Adrenal gland (tissue), 19 donors: ENCODE measurements at regions of chr12 and their contacts with region 1.

Region 1: DNA sequence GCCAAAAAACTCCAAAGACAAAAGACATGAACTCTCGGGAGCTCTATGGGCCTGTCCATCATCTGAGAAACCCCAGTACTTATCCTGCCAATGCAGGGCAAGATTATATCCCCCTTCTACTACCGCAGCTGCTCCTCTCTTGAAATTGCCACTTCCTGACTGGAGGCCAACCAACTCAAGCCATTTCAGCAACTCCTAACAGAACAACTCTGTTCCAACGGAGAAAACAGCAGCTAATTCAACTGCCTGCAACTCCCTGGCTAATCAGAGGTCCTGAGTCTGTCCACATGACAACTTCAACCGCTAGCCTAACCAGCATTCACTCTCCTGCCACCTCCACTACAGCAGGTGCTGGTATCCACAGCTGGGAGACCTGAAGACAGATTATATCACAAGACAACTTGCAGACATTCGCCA is 24.1 kb downstream of the CEP83 start:
- DNase-seq: no peak
- H3K4me3 ChIP-seq: no peak overlapping the region
- H3K27ac ChIP-seq: no peak overlapping the region
- H3K4me1 ChIP-seq: no peaks in the 10 kb centered on the region
- H3K27me3 ChIP-seq: no peaks in the 10 kb centered on the region
- CTCF ChIP-seq: no peak
- POLR2A ChIP-seq: no peak

Region 2: GRCh38 chr12:94133964-94134795 is 301.3 kb before region 1 on chr12:
- intact Hi-C with region 1: loop called in 1 of 2 experiments (anchors 10 kb)
- DNase-seq: peak in 2 of 7 donors; percentile 31 to 37
- H3K4me3 ChIP-seq: no peak overlapping the region
- H3K27ac ChIP-seq: no peak overlapping the region
- H3K4me1 ChIP-seq: no peaks in the 10 kb centered on the region
- H3K27me3 ChIP-seq: no peaks in the 10 kb centered on the region
- CTCF ChIP-seq: peak; percentile 65 to 83 (median 77)
- POLR2A ChIP-seq: no peak

Region 3: GRCh38 chr12:94149119-94149780 is 286.3 kb before region 1 on chr12:
- intact Hi-C with region 1: loop called in 1 of 2 experiments (anchors 10 kb)
- DNase-seq: peak in 4 of 7 donors; percentile 31 to 61 (median 46)
- H3K4me3 ChIP-seq: peak overlapping the region in 2 of 4 donors; percentile 38 to 72
- H3K27ac ChIP-seq: peak overlapping the region in 2 of 5 donors; percentile 45 to 62
- H3K4me1 ChIP-seq: peaks cover 0 to 4% of the 10 kb centered on the region in 2 donors
- H3K27me3 ChIP-seq: peaks cover 10% of the 10 kb centered on the region
- CTCF ChIP-seq: peak in 2 of 6 experiments; percentile 15 to 21
- POLR2A ChIP-seq: no peak

Region 4: DNA sequence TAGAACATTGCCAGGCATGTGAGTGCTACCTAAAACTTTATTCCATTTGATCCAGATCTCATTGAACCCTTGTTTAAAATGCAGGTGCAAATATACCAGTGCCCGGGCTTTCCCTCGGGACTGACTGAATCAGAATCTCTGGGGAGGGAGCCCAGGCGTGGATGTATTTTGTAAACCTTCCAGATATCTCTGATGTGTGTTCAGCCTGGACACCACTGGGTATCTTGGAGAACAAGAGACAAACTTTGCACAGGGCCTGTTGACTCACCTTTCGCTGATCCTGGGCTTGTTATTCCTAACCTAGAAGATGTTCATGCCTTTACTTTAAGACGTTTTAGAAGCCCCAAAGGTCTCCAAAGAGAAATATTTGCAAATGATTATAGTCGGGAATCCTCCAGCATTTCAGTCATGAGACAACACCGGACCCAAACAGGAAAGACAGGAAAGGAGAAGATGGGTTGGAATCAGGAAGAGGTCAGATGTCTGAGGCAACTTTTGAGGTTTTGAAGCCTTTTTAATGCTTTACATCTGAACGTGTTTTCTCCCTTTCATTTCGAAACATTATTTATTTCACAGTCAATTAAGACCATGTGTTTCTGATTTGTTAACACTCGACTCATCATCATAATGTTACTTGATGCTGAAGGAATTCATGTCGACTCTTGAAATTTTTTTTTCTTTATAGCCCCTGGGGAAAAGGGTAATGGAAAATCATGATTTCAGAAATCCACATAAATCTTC is 168.6 kb before region 1 on chr12:
- intact Hi-C with region 1: no loop called
- DNase-seq: no peak
- H3K4me3 ChIP-seq: no peak overlapping the region
- H3K27ac ChIP-seq: peak overlapping the region in 2 of 5 donors; percentile 46 to 57
- H3K4me1 ChIP-seq: peaks cover 10 to 14% of the 10 kb centered on the region in 2 donors
- H3K27me3 ChIP-seq: no peaks in the 10 kb centered on the region
- CTCF ChIP-seq: no peak
- POLR2A ChIP-seq: no peak